Activated CD4-positive, alpha-beta memory T cell treated with anti-CD3 and anti-CD28 coated beads for 36 hours (primary cell): ENCODE measurements at regions of chr4 and their contacts with region 1.

Region 1: GRCh38 chr4:109648266-109648996 is 54.8 kb downstream of the CASP6 start:
- DNase-seq: no peak
- H3K4me3 Mint-ChIP-seq: peak overlapping the region; percentile 41
- H3K27ac Mint-ChIP-seq: peak overlapping the region; percentile 76
- H3K4me1 Mint-ChIP-seq: peaks cover 42% of the 10 kb centered on the region
- H3K27me3 Mint-ChIP-seq: no peaks in the 10 kb centered on the region

Region 2: GRCh38 chr4:109248322-109248900 is 400.0 kb before region 1 on chr4:
- CTCF ChIA-PET with region 1: no interaction called
- POLR2A ChIA-PET with region 1: no interaction called
- intact Hi-C with region 1: no loop called
- DNase-seq: no peak
- H3K4me3 Mint-ChIP-seq: no peak overlapping the region
- H3K27ac Mint-ChIP-seq: no peak overlapping the region
- H3K4me1 Mint-ChIP-seq: no peaks in the 10 kb centered on the region
- H3K27me3 Mint-ChIP-seq: no peaks in the 10 kb centered on the region

Region 3: GRCh38 chr4:109588176-109588575 is 60.3 kb before region 1 on chr4:
- CTCF ChIA-PET with region 1: no interaction called
- POLR2A ChIA-PET with region 1: no interaction called
- intact Hi-C with region 1: loop called (anchors 1 kb)
- DNase-seq: peak; percentile 81
- H3K4me3 Mint-ChIP-seq: no peak overlapping the region
- H3K27ac Mint-ChIP-seq: peak overlapping the region; percentile 58
- H3K4me1 Mint-ChIP-seq: peaks cover 64% of the 10 kb centered on the region
- H3K27me3 Mint-ChIP-seq: no peaks in the 10 kb centered on the region

Region 4: GRCh38 chr4:109631532-109632108 is 16.8 kb before region 1 on chr4:
- CTCF ChIA-PET with region 1: no interaction called
- POLR2A ChIA-PET with region 1: no interaction called
- intact Hi-C with region 1: loop called (anchors 2 kb)
- DNase-seq: no peak
- H3K4me3 Mint-ChIP-seq: no peak overlapping the region
- H3K27ac Mint-ChIP-seq: no peak overlapping the region
- H3K4me1 Mint-ChIP-seq: peaks cover 31% of the 10 kb centered on the region
- H3K27me3 Mint-ChIP-seq: no peaks in the 10 kb centered on the region